ENCODE measurements at regions of chr13 and their contacts with region 1.

Region 1: GRCh38 chr13:97124916-97125809 is 97.0 kb upstream of the MBNL2 start:
- DNase-seq: peak; percentile 69
- ATAC-seq: peak; percentile 61
- H3K4me3 Mint-ChIP-seq: no peak overlapping the region
- H3K27ac Mint-ChIP-seq: no peak overlapping the region
- H3K4me1 Mint-ChIP-seq: peaks cover 36% of the 10 kb centered on the region
- H3K27me3 Mint-ChIP-seq: peaks cover 32% of the 10 kb centered on the region

Region 2: GRCh38 chr13:97141564-97142005 is 16.4 kb after region 1 on chr13:
- CTCF ChIA-PET with region 1: no interaction called
- POLR2A ChIA-PET with region 1: interaction called, 3 read pairs
- intact Hi-C with region 1: loop called in 1 of 2 experiments (anchors 1 kb)
- DNase-seq: peak; percentile 55
- ATAC-seq: peak; percentile 99
- H3K4me3 Mint-ChIP-seq: no peak overlapping the region
- H3K27ac Mint-ChIP-seq: no peak overlapping the region
- H3K4me1 Mint-ChIP-seq: peaks cover 16% of the 10 kb centered on the region
- H3K27me3 Mint-ChIP-seq: peaks cover 26% of the 10 kb centered on the region

Region 3: DNA sequence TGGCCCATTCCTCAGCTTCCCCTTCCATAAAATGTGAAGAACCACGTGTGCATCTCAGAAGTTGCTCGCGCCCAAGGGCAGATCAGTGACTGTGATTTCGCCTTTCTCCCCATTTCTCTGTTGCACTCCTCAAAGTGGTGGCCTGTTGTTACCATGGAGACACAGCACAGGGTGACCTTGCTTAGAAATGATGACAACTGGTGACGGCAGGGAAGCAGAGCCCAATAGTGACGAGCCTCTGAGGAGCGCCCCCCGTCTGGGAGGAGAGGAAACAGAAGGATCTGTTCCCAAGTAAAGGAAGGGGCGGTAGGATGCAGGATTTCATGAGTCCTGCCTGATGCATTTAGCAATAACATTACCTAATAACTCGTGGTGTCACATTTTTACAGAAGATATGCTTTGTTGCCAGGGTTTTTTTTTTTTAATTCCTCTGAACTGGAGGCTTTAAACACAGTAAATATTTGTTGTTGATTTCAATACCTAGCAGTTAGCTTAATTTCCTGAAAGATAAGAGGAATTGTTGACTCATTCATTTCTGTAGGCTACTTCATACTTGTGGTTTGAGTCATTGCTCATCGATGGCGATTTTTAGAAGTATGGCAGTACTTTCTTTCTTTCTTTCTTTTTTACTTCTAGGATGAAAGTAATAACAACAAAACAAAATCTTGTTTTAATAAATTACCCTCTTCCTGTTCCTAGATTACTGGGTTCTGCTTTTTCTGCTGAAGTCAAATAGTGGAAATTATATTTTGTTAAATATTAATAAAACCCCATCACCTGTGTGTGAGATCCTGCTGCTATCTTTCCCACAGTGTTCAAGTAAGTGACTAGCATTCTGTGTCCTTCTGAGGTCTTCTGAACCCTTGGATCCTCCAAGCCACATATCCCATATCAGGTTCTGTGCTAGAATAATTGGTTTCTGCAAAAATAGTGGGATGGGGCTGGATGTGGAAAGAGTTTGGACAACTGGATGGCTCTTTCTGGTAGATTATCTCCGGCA is 132.9 kb after region 1 on chr13:
- CTCF ChIA-PET with region 1: no interaction called
- POLR2A ChIA-PET with region 1: no interaction called
- intact Hi-C with region 1: loop called (anchors 1 kb)
- DNase-seq: peak; percentile 27
- ATAC-seq: peak; percentile 45
- H3K4me3 Mint-ChIP-seq: peak overlapping the region; percentile 7
- H3K27ac Mint-ChIP-seq: peak overlapping the region; percentile 76
- H3K4me1 Mint-ChIP-seq: peaks cover 78% of the 10 kb centered on the region
- H3K27me3 Mint-ChIP-seq: no peaks in the 10 kb centered on the region

Region 4: GRCh38 chr13:97295283-97296182 is 170.4 kb after region 1 on chr13:
- CTCF ChIA-PET with region 1: no interaction called
- POLR2A ChIA-PET with region 1: no interaction called
- intact Hi-C with region 1: loop called (anchors 1 kb)
- DNase-seq: no peak
- ATAC-seq: no peak
- H3K4me3 Mint-ChIP-seq: no peak overlapping the region
- H3K27ac Mint-ChIP-seq: no peak overlapping the region
- H3K4me1 Mint-ChIP-seq: peaks cover 46% of the 10 kb centered on the region
- H3K27me3 Mint-ChIP-seq: no peaks in the 10 kb centered on the region

Region 5: DNA sequence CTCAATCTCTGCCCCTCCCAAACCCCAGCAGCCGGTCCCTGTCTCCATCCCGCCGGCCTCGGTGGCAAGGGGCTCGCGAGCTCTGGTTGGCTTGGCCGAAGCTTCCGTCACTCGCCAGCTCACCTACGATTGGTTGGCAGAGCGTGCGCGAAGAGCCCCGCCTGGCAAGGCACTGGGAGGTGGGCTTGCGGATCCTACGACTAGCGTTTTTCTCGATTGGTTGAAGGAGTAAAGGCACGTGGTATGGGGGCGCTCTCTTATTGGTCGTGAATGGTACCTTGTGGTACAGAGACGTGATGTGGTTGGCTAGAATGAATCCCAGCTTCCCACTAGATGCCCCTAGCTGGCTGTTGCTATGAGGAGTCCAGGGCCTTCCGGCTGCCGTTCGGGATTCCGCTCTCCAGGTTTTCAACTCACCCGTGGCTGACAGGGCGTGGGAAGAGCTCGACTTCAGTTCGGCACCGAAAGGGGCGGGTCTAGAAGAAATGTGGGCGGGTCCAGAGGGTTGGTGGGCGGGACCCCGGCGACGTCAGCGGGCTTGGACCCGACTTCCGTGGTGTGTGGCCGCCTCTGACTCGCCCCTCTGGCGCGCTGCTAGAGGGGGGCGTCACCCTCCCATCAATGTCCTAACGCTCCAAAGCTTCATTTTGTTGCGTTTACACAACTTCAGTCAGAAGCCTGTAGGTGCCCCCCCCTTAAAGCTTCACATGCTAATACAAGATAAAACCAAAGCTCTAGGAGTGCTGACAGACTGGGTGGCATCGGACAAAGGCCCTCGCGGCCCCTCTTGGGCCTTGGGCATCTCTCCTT is 308.0 kb after region 1 on chr13:
- CTCF ChIA-PET with region 1: no interaction called
- POLR2A ChIA-PET with region 1: no interaction called
- intact Hi-C with region 1: loop called in 1 of 2 experiments (anchors 1 kb)
- DNase-seq: peak; percentile 98
- ATAC-seq: peak; percentile 85
- H3K4me3 Mint-ChIP-seq: peak overlapping the region; percentile 94
- H3K27ac Mint-ChIP-seq: peak overlapping the region; percentile 99
- H3K4me1 Mint-ChIP-seq: peaks cover 25% of the 10 kb centered on the region
- H3K27me3 Mint-ChIP-seq: peaks cover 5% of the 10 kb centered on the region

Measured in activated CD4-positive, alpha-beta T cell treated with anti-CD3 and anti-CD28 coated beads for 36 hours (primary cell).